A673 (cell line): ENCODE measurements at regions of chr2 and their contacts with region 1.

Region 1: DNA sequence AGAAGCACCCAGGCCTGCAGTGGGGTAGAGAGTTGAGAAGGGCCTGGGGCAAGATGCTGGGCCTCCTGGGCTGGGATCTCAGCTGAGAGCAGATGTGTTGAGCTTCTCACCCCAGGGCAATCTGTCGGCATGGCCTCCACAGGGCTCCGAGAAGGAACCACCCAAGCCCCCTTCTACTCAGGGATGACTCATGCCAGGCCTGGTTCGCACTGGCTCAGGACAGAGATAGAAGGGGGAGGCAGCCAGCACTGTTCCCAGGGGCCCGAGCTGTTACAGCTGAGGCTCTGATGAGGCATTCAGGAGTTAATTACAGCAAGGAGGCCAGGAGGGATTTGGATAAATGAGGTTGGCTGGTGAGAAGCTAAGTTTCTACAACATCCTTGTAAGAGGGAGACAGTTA is 62.5 kb downstream of the CENPO start:
- DNase-seq: peak; percentile 58
- H3K4me3 ChIP-seq: no peak overlapping the region
- H3K27ac ChIP-seq: no peak overlapping the region
- H3K4me1 ChIP-seq: no peaks in the 10 kb centered on the region
- H3K27me3 ChIP-seq: no peaks in the 10 kb centered on the region
- CTCF ChIP-seq: no peak

Region 2: GRCh38 chr2:25041928-25042320 is 186.2 kb after region 1 on chr2 and contains the start of gene EFR3B:
- CTCF ChIA-PET with region 1: no interaction called
- POLR2A ChIA-PET with region 1: no interaction called
- intact Hi-C with region 1: loop called (anchors 5 kb)
- DNase-seq: peak; percentile 96
- H3K4me3 ChIP-seq: peak within 1 kb of the TSS; percentile 61
- H3K27ac ChIP-seq: no peak within 1 kb of the TSS
- H3K4me1 ChIP-seq: peaks cover 18% of the 10 kb centered on the region
- H3K27me3 ChIP-seq: peaks cover 30% of the 10 kb centered on the region
- CTCF ChIP-seq: no peak
- total RNA-seq, gene EFR3B: 0.76 and 1.0 TPM in 2 replicates

Region 3: GRCh38 chr2:25276569-25277465 is 421.1 kb after region 1 on chr2:
- CTCF ChIA-PET with region 1: no interaction called
- POLR2A ChIA-PET with region 1: interaction called, 12 read pairs
- intact Hi-C with region 1: no loop called
- DNase-seq: no peak
- H3K4me3 ChIP-seq: no peak overlapping the region
- H3K27ac ChIP-seq: no peak overlapping the region
- H3K4me1 ChIP-seq: peaks cover 22% of the 10 kb centered on the region
- H3K27me3 ChIP-seq: no peaks in the 10 kb centered on the region
- CTCF ChIP-seq: peak; percentile 45; the same call in 1 of the 2 replicates